ENCODE measurements at regions of chr10 and their contacts with region 1.

Region 1: GRCh38 chr10:91632671-91633550 is at the start of gene PPP1R3C:
- DNase-seq: peak; percentile 42
- ATAC-seq: peak; percentile 95
- H3K4me3 ChIP-seq: peak within 1 kb of the TSS; percentile 57 to 62
- H3K27ac ChIP-seq: peak within 1 kb of the TSS; percentile 45
- H3K4me1 ChIP-seq: peaks cover 7% of the 10 kb centered on the region; the same call in 1 of the 2 replicates
- H3K27me3 ChIP-seq: peaks cover 13% of the 10 kb centered on the region
- CTCF ChIP-seq: peak; percentile 75
- total RNA-seq, gene PPP1R3C: 1.2 TPM

Region 2: DNA sequence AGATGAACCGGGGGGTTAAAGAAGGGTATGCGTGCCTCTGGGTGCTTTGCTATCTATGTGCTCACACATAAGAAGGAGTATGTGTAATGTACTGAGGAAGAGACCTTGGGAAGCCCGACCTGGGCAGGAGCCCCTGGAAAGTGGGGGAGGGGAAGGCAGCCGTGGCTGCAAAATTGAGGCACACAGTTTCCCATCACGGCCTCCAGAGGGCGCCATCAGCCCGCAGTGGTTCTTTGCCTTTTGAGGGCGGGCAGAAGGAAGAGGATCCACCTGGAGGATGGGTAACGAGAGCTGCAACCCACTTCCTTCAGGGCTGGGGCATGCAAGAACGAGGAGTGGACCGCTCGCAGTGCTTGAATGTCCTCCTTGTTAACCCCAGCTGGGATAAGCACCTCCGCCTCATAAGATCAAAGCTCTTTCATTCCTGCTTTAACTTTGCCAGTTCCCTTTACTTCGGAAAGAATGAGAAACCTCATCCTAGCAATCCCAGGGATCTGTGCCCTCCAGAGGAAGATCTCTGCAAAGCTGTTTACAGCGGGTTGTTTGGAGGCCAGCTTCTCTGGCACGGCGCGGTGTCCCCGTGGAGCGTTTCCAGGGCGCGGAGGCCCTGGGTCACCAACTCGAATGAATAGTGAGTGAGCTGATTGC is 334.6 kb before region 1 on chr10:
- CTCF ChIA-PET with region 1: interaction called, 11 read pairs
- POLR2A ChIA-PET with region 1: no interaction called
- in situ Hi-C with region 1: no loop called
- intact Hi-C with region 1: loop called (anchors 1 kb)
- DNase-seq: peak; percentile 71
- ATAC-seq: peak; percentile 97
- H3K4me3 ChIP-seq: peak overlapping the region; percentile 44 to 81
- H3K27ac ChIP-seq: peak overlapping the region; percentile 64
- H3K4me1 ChIP-seq: no peaks in the 10 kb centered on the region; the same call in 1 of the 2 replicates
- H3K27me3 ChIP-seq: no peaks in the 10 kb centered on the region
- CTCF ChIP-seq: peak; percentile 99

Region 3: DNA sequence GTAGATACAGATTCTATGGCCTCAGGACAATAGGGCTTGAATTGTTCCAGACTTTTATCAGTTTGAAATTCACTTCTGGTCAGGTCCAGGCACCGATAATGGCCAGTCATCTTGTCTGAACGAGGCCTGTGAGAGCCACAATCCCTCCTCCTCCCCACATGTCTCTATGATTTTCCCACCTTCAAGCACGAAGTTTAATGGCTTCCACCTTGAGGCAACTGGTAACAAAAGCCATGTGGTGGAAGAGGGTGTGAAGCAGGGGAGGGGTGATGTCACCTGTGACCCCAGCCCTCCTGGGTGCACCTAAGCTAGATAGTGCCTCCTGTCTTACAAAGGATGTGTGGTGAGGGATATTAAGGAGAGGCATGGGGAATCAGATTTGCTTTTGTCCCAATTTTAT is 323.2 kb before region 1 on chr10:
- CTCF ChIA-PET with region 1: no interaction called
- POLR2A ChIA-PET with region 1: no interaction called
- in situ Hi-C with region 1: no loop called
- intact Hi-C with region 1: no loop called
- DNase-seq: no peak
- ATAC-seq: no peak
- H3K4me3 ChIP-seq: no peak overlapping the region
- H3K27ac ChIP-seq: no peak overlapping the region
- H3K4me1 ChIP-seq: no peaks in the 10 kb centered on the region
- H3K27me3 ChIP-seq: peaks cover 16% of the 10 kb centered on the region
- CTCF ChIP-seq: no peak

Region 4: GRCh38 chr10:91493313-91493712 is 139.6 kb before region 1 on chr10:
- CTCF ChIA-PET with region 1: interaction called, 5 read pairs
- POLR2A ChIA-PET with region 1: no interaction called
- in situ Hi-C with region 1: no loop called
- intact Hi-C with region 1: loop called (anchors 5 kb)
- DNase-seq: no peak
- ATAC-seq: no peak
- H3K4me3 ChIP-seq: no peak overlapping the region
- H3K27ac ChIP-seq: no peak overlapping the region
- H3K4me1 ChIP-seq: no peaks in the 10 kb centered on the region
- H3K27me3 ChIP-seq: no peaks in the 10 kb centered on the region
- CTCF ChIP-seq: peak; percentile 15; the same call in 1 of the 2 replicates